ENCODE measurements at regions of chr3 and their contacts with region 1.

Region 1: DNA sequence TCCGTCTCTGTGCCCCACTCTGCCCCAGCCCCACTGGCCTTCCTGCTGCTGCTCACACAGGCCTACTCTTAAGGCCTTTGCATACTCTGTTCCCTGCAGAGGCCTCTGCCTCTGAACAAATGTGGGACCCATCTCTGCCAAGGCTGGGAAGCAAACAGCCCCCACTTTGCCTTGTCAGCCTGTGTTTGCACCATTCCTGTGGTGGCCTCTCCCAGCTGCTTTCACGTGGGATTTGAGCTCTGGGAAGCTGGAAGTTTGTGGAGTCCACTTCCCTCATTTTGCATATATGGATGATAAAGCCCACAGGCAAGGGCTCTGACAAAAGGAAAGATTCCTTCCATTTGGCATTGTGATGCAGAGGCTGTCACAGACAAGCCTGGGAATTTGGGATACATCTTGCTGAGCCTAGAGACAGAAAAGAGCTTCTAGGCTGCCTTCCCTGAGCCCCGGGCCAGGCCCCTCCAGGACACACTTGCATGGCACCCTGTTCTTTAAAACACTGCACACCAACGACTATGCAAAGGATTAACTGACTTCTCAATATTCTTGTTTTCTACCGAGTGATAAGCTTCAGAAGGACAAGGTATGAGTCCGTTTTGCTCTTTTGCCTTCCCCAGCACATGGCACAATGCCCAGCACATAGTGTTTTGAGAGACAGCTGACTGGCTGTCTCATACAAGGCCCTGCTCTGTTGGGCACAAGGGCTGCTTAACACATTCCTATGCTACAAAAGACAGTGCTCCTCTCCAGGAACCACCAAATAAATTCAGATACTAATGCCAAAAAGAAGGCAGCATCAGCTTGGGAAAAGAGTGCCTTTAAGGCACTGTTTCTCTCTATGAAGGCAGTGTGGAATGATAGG is 120.7 kb upstream of the TOPAZ1 start:
- DNase-seq: no peak
- H3K4me3 ChIP-seq: no peak overlapping the region
- H3K27ac ChIP-seq: no peak overlapping the region
- H3K4me1 ChIP-seq: no peaks in the 10 kb centered on the region
- H3K27me3 ChIP-seq: no peaks in the 10 kb centered on the region
- CTCF ChIP-seq: no peak
- POLR2A ChIP-seq: no peak

Region 2: DNA sequence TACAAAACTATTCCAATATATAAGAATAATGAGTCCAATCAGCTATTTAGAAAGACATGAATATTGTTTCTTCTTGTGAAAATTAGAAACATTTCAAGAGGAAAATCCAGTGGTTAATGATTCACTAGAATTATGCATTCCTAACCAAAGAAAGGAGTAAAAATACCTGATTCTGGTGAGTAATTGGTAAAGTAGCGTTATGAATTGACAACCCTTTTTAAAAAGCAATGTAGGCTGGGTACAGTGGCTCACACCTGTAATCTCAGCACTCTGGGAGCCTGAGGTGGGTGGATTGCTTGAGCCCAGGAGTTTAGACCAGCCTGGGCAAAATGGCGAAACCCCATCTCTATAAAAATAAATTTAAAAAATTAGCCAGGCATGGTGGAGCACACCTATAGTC is 164.0 kb after region 1 on chr3:
- intact Hi-C with region 1: no loop called
- DNase-seq: no peak
- H3K4me3 ChIP-seq: no peak overlapping the region
- H3K27ac ChIP-seq: no peak overlapping the region
- H3K4me1 ChIP-seq: no peaks in the 10 kb centered on the region
- H3K27me3 ChIP-seq: no peaks in the 10 kb centered on the region
- CTCF ChIP-seq: no peak
- POLR2A ChIP-seq: no peak

Region 3: DNA sequence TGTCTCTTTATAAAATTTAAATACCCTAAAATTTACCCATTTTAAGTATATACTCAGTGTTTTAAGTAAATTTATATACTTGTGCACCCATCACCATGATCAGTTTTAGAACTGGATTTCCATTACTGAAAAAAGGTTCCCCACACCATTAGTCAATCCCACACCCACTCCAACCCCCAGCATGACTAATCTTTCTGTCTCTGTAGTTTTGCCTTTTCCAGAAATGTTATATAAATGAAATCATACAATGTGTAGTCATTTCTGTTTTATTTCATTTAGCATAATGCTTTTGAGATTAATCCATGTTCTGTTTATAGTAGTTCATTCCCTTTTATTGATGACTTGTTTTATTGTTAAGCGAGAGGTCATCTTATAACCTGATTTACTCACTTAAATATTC is 1407.5 kb after region 1 on chr3:
- intact Hi-C with region 1: loop called (anchors 10 kb)
- DNase-seq: no peak
- H3K4me3 ChIP-seq: no peak overlapping the region
- H3K27ac ChIP-seq: no peak overlapping the region
- H3K4me1 ChIP-seq: no peaks in the 10 kb centered on the region
- H3K27me3 ChIP-seq: no peaks in the 10 kb centered on the region
- CTCF ChIP-seq: no peak
- POLR2A ChIP-seq: no peak